ENCODE measurements at regions of chr5 and their contacts with region 1.

Region 1: GRCh38 chr5:112551419-112552032 is 132.4 kb upstream of the EPB41L4A start:
- DNase-seq: peak in 1 of 2 donors; percentile 52
- H3K4me3 ChIP-seq: no peak overlapping the region
- H3K27ac ChIP-seq: no peak overlapping the region
- H3K4me1 ChIP-seq: no peaks in the 10 kb centered on the region
- H3K27me3 ChIP-seq: no peaks in the 10 kb centered on the region
- CTCF ChIP-seq: peak; percentile 70 to 87 (median 79)
- POLR2A ChIP-seq: no peak

Region 2: DNA sequence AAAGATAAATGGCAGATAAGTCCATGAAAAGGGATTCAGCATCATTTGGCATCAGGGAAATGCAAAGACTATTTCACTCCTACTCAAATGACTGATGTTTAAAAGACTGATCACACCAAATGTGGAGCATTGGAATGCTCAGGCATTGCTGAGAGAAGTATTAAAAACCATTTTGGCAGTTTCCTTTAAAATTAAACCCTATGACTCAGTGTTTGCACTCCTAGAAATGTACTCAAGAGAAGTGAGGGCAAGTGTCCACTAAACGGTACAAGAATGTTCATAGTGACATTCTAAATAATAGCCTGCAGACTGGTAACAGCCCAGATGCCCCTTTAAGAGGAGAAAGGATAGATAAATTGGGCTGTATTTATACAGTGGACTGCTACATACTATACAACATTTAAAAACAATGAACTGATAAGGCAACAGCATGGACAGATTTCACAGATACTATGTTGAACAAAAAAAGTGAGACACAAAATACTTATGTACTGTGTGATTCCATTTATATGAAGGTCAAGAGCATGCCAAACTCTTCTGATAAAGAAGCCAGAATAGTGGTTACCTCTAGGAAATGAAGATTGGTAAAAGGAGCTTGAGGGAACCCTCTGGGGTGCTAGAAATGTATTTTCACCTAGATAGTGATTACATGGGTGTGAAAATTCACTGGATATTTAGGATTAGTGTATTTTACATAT is 210.7 kb after region 1 on chr5:
- intact Hi-C with region 1: loop called (anchors 5 kb)
- DNase-seq: no peak
- H3K4me3 ChIP-seq: no peak overlapping the region
- H3K27ac ChIP-seq: no peak overlapping the region
- H3K4me1 ChIP-seq: no peaks in the 10 kb centered on the region
- H3K27me3 ChIP-seq: no peaks in the 10 kb centered on the region
- CTCF ChIP-seq: no peak
- POLR2A ChIP-seq: no peak

Measured in uterus (tissue), 4 donors.